Activated CD8-positive, alpha-beta T cell treated with anti-CD3 and anti-CD28 coated beads for 36 hours (primary cell): ENCODE measurements at regions of chr7 and their contacts with region 1.

Region 1: DNA sequence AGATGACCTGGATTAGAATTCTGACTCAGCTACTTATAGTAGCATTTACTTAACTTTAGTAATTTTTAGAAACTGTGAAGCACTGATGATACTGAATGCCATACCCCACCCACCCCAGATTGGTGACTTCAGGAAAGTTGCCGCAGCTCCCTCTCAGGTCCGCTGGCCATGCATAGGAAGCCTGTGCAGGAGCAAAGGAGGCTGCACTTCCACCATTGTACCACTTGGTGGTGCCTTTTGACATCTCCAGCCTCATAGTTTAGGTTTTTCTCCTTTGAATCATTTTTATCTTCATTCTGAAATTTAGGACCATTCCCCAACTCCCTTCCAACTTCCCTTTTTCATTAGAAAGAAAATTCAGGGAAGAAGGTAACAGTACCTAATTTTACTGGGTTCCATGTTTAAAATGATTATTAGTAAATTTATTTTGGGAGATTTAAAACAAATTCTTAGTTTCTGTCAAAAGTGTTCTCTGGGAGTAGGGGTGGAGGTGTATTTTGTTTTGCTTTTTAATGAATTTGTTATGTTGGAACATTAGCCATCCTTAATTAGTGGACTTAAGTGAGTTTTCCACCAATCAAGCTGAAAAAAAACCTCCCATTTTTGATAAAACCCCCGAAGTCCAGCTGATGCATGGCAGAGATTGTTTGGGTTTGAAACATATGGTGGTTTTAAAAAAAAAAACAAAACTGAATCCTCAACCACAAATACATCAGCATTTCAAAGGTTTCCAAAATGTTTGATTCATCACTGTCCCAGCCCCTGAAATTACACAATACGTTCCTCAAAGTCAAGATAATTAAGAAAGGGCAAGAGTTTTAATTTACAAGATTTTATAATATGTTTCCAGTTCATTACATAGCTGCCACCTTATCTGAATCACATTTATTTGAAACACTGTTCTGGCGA is 109.6 kb downstream of the WNT2 start:
- DNase-seq: peak; percentile 67
- ATAC-seq: peak; percentile 79
- H3K4me3 Mint-ChIP-seq: no peak overlapping the region
- H3K27ac Mint-ChIP-seq: no peak overlapping the region
- H3K4me1 Mint-ChIP-seq: no peaks in the 10 kb centered on the region
- H3K27me3 Mint-ChIP-seq: no peaks in the 10 kb centered on the region
- CTCF ChIP-seq: peak; percentile 93

Region 2: DNA sequence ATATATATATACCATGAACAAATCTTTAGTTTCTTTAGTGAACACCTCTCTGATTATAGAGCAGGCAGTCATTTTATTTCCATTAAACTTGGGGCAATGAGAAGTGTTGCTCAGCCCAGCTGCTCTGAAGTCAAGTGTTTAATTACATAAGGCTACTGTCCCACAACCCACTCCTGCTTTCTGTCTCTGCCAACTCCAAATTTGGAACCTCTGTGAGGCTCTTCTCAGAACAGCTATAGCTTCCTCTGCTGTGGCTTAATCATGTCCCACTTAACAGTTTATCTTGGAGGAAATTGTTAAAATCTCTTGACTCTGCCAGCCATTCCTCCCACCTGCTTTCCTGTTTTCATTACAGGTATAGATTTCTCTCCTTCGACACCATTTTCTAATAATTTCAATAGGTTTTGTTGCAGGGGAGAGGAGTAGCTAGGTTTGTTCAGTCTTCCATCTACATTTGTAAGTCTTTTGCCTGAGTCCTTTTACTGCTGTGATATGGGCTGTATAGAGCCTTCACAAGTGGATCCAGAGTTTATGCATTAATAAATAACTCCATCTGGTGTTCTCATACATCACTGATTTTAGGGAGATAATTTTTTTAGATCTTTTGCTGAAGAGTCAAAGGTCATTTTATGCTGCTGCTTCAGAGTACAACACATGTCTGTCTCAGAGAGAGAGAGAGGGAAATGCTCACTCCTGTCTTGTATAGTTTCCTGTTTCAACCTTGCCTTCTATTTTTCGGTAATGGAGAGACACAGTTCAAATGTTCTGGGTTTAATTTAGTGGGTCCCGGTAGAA is 60.8 kb before region 1 on chr7:
- CTCF ChIA-PET with region 1: no interaction called
- POLR2A ChIA-PET with region 1: no interaction called
- intact Hi-C with region 1: no loop called
- DNase-seq: no peak
- ATAC-seq: no peak
- H3K4me3 Mint-ChIP-seq: no peak overlapping the region
- H3K27ac Mint-ChIP-seq: no peak overlapping the region
- H3K4me1 Mint-ChIP-seq: no peaks in the 10 kb centered on the region
- H3K27me3 Mint-ChIP-seq: no peaks in the 10 kb centered on the region
- CTCF ChIP-seq: no peak

Region 3: DNA sequence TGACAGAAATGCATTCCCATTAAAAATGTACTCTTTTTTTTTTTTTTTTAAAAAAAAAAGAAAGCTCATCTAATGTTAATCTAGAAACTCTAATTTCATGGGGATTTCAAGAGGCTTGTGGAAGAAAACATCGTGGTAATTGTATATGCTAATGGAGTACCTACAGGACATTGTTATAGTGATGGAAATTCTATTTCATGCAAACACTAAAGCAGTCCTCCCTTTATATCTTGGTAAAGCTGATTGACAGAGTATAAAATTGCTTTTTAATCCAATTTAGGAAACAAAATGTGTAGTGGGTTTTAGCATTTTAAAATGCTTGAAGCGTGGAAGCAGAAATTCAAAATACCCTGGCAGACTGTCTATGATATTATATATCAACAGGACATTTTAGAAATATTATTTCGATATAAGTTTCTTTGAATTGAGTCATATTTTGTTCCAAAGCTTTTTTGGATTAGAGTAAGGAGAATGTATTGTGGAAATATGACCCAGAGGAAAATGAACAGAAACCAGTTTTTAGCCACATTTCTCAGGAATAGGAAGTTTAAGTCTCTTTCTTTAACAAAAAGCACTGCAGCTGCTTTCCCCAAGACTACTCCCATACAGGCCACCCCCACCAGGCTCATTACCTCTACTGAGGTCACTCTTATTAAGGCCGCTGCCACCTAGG is 12.3 kb before region 1 on chr7:
- CTCF ChIA-PET with region 1: interaction called, 10 read pairs
- POLR2A ChIA-PET with region 1: no interaction called
- intact Hi-C with region 1: no loop called
- DNase-seq: no peak
- ATAC-seq: no peak
- H3K4me3 Mint-ChIP-seq: no peak overlapping the region
- H3K27ac Mint-ChIP-seq: no peak overlapping the region
- H3K4me1 Mint-ChIP-seq: no peaks in the 10 kb centered on the region
- H3K27me3 Mint-ChIP-seq: no peaks in the 10 kb centered on the region
- CTCF ChIP-seq: no peak

Region 4: GRCh38 chr7:117302396-117302795 is 89.2 kb after region 1 on chr7:
- CTCF ChIA-PET with region 1: no interaction called
- POLR2A ChIA-PET with region 1: no interaction called
- intact Hi-C with region 1: no loop called
- DNase-seq: no peak
- ATAC-seq: no peak
- H3K4me3 Mint-ChIP-seq: no peak overlapping the region
- H3K27ac Mint-ChIP-seq: no peak overlapping the region
- H3K4me1 Mint-ChIP-seq: no peaks in the 10 kb centered on the region
- H3K27me3 Mint-ChIP-seq: no peaks in the 10 kb centered on the region
- CTCF ChIP-seq: no peak

Region 5: DNA sequence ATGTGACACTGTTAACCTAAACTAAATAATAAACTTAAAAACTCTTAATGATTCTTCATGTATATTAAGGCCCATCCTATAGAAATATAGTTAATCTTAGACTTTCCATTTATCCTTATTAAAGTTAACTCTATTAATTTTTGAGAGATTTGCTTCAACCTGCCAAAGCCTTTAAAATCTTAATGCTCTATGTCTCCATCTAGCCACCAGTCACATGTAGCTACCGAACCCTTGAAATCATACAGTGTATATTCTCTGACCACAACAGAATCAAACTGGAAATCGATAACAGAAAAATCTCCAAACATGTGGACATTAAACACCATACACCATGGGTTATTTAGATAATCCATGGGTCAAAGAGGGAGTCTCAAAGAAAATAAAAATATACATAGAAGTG is 162.2 kb after region 1 on chr7:
- CTCF ChIA-PET with region 1: no interaction called
- POLR2A ChIA-PET with region 1: no interaction called
- intact Hi-C with region 1: no loop called
- DNase-seq: no peak
- ATAC-seq: no peak
- H3K4me3 Mint-ChIP-seq: no peak overlapping the region
- H3K27ac Mint-ChIP-seq: no peak overlapping the region
- H3K4me1 Mint-ChIP-seq: no peaks in the 10 kb centered on the region
- H3K27me3 Mint-ChIP-seq: no peaks in the 10 kb centered on the region
- CTCF ChIP-seq: no peak

Region 6: DNA sequence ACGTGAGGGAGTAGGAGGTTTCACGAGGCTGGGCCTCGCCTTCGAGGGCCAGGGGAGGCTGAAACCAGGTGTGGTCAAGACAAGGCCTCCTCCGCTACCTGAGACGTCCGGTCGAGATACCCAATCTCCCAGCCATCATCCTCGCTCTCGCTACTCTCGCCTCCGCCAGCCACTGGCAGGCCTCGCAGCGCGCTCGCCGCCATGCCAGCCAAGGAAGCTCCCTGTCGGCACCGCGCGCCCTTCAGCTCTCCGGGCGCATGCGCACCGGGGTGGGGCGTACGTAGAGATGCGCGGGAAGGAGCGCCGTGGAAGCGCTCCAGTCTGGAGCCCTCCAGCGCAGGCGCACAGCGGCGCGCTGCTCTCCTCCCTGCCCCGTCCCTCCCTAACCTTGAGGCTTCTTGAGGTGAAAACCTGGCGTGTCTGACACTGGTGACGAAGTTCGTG is 214.1 kb after region 1 on chr7 and contains the start of gene ASZ1:
- CTCF ChIA-PET with region 1: no interaction called
- POLR2A ChIA-PET with region 1: no interaction called
- intact Hi-C with region 1: no loop called
- DNase-seq: no peak
- ATAC-seq: no peak
- H3K4me3 Mint-ChIP-seq: no peak within 1 kb of the TSS
- H3K27ac Mint-ChIP-seq: no peak within 1 kb of the TSS
- H3K4me1 Mint-ChIP-seq: no peaks in the 10 kb centered on the region
- H3K27me3 Mint-ChIP-seq: no peaks in the 10 kb centered on the region
- CTCF ChIP-seq: no peak
- total RNA-seq, gene ASZ1: not detected

Region 7: DNA sequence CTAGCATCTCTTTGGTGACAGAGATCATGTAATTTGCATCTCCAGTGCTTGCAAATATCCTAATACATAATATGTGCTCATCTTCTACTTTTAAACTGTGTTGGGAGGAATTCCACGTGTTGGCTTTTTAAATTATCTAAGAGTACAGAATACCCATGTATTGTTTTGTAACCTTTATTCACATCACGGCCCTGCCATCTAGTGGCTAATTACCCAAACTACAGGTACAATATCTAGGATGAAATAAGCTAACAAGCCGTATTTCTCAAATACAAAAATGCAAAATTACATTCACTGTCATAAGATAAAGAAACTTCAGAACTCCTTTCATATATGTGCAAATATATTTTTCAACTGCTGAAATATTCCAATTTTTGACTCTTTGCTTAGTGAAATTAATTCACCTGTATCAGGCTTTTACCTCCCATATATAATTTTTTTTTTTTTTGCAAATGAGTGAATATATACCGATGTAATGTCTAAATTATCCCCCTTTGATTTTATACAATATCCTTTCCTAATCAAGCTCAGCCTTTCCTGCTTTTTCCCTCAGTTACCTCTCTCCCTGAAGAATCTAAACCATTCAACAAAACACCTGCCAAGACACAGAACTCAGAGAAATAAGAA is 940.4 kb after region 1 on chr7:
- CTCF ChIA-PET with region 1: interaction called, 4 read pairs
- POLR2A ChIA-PET with region 1: no interaction called
- intact Hi-C with region 1: loop called (anchors 10 kb)
- DNase-seq: peak; percentile 43
- ATAC-seq: peak; percentile 55
- H3K4me3 Mint-ChIP-seq: no peak overlapping the region
- H3K27ac Mint-ChIP-seq: no peak overlapping the region
- H3K4me1 Mint-ChIP-seq: no peaks in the 10 kb centered on the region
- H3K27me3 Mint-ChIP-seq: peaks cover 34% of the 10 kb centered on the region
- CTCF ChIP-seq: peak; percentile 77